ENCODE measurements at regions of chr17 and their contacts with region 1.

Region 1: GRCh38 chr17:37609170-37610040 is at the start of gene SYNRG:
- DNase-seq: peak; percentile 92
- H3K4me3 Mint-ChIP-seq: peak within 1 kb of the TSS; percentile 74
- H3K27ac Mint-ChIP-seq: peak within 1 kb of the TSS; percentile 88
- H3K4me1 Mint-ChIP-seq: peaks cover 35% of the 10 kb centered on the region
- H3K27me3 Mint-ChIP-seq: no peaks in the 10 kb centered on the region
- total RNA-seq, gene SYNRG: 51.3 and 51.4 TPM in 2 replicates

Region 2: DNA sequence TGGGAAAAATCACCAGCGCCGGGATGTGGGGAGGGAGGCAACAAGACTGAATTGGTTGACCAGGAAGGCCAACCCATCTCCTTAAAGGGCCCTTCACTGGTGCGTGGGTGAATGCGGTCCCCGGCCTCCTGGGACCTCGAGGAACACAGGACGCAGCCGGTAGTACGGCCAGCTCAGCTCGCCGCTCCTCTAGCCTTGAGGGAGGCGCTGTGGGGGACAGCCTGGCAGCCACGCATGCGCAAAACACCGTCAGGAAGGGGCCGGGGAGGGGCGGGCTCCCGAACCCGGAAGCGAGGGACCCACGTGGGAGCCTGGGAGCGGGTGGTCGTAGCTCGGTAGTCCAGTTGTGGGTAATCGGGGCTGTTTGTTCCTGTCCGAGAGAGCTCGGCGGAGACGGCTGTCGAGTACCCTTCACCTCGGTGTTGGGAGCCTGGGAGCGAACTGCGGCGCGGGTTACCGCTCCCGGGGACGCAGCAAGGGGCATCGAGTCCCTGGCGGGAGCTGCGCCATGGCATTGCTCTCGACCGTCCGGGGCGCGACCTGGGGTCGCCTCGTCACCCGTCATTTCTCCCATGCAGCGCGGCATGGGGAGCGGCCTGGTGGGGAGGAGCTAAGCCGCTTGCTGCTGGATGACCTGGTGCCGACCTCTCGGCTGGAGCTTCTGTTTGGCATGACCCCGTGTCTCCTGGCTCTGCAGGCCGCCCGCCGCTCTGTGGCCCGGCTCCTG is 1007.9 kb before region 1 on chr17 and contains the start of gene MRM1:
- intact Hi-C with region 1: loop called (anchors 10 kb)
- DNase-seq: peak; percentile 85
- H3K4me3 Mint-ChIP-seq: peak within 1 kb of the TSS; percentile 91
- H3K27ac Mint-ChIP-seq: peak within 1 kb of the TSS; percentile 70
- H3K4me1 Mint-ChIP-seq: peaks cover 38% of the 10 kb centered on the region
- H3K27me3 Mint-ChIP-seq: no peaks in the 10 kb centered on the region
- total RNA-seq, gene MRM1: 21.0 and 22.7 TPM in 2 replicates

Region 3: GRCh38 chr17:37358830-37359681 is 250.3 kb before region 1 on chr17:
- intact Hi-C with region 1: loop called (anchors 2 kb)
- DNase-seq: peak; percentile 90
- H3K4me3 Mint-ChIP-seq: peak overlapping the region; percentile 98
- H3K27ac Mint-ChIP-seq: peak overlapping the region; percentile 92
- H3K4me1 Mint-ChIP-seq: peaks cover 32% of the 10 kb centered on the region
- H3K27me3 Mint-ChIP-seq: no peaks in the 10 kb centered on the region

Region 4: DNA sequence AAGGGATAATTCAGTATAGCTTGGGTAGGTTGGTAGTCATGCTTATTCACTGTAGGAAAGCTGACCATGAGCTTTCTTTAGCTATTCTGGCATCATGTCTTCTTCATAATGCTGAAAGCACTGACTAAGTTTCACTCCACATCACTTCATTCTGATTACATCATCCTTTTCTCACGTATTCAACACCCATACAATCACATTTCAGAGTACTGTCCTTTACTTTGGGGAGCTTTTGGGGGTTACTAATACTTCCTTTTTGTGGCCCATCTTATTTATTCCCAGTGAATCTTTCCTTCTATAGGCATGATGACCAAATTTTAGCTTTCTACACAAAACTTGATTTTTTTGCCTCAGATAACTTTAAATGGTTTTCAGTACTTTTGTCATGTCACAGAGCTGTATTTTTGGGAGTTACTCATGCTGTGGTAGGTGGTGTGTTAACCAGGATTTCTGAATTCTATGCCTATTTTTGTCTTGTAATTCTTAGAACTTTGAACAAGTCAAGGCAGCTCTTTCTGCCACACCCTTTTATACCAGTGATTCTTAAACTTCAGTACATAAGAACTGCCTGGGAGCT is 179.3 kb before region 1 on chr17:
- intact Hi-C with region 1: no loop called
- DNase-seq: no peak
- H3K4me3 Mint-ChIP-seq: peak overlapping the region; percentile 19
- H3K27ac Mint-ChIP-seq: peak overlapping the region; percentile 95
- H3K4me1 Mint-ChIP-seq: peaks cover 37% of the 10 kb centered on the region
- H3K27me3 Mint-ChIP-seq: no peaks in the 10 kb centered on the region

Region 5: DNA sequence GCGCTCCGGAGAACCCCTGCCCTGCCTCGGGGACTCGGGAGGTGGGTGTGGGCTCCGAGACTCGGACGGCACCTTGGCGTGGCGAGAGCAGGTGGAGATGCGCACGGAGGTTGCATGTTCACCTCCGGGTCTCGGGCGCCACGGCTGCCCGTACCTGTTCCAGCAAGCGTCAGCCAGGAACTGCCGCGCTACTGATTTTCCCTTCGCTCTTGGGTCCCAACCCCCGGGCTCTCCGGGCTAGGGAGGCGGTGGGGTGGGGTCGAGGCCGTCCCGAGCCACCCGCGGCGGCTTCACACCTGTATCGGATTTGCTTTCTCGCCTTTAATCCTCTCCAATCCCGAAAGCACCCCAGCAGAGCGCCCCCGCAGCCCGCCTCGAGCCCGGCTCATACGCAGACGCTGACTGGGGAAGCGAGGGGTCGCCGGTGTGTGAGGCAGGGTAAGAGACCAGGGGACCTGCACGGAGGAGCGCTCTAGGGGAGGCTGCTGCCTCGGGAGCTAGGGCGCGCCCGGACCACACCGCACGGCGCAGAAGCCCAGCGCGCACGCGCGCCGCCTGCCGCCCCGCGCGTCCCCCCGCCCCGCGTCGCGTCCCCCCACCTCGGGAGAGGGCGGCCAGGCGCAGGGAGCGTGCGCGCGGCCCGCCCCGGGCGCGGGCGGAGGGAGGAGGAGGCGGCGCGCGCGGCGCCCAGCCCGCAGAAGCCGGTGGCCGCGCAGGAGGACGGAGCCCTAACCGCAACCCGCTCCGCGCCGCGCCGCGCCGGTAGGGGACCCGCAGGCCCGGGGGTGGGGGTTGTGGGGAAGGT is 120.0 kb before region 1 on chr17 and contains the start of gene DUSP14:
- intact Hi-C with region 1: loop called (anchors 2 kb)
- DNase-seq: peak; percentile 74
- H3K4me3 Mint-ChIP-seq: peak within 1 kb of the TSS; percentile 94
- H3K27ac Mint-ChIP-seq: peak within 1 kb of the TSS; percentile 97
- H3K4me1 Mint-ChIP-seq: peaks cover 50% of the 10 kb centered on the region
- H3K27me3 Mint-ChIP-seq: peaks cover 3% of the 10 kb centered on the region
- total RNA-seq, gene DUSP14: 21.4 and 22.3 TPM in 2 replicates

Region 6: GRCh38 chr17:37643118-37643766 is 33.8 kb after region 1 on chr17 and contains the start of gene DDX52:
- intact Hi-C with region 1: loop called (anchors 1 kb)
- DNase-seq: peak; percentile 83
- H3K4me3 Mint-ChIP-seq: peak within 1 kb of the TSS; percentile 96
- H3K27ac Mint-ChIP-seq: peak within 1 kb of the TSS; percentile 81
- H3K4me1 Mint-ChIP-seq: peaks cover 33% of the 10 kb centered on the region
- H3K27me3 Mint-ChIP-seq: peaks cover 36% of the 10 kb centered on the region
- total RNA-seq, gene DDX52: 48.7 and 55.0 TPM in 2 replicates

Region 7: DNA sequence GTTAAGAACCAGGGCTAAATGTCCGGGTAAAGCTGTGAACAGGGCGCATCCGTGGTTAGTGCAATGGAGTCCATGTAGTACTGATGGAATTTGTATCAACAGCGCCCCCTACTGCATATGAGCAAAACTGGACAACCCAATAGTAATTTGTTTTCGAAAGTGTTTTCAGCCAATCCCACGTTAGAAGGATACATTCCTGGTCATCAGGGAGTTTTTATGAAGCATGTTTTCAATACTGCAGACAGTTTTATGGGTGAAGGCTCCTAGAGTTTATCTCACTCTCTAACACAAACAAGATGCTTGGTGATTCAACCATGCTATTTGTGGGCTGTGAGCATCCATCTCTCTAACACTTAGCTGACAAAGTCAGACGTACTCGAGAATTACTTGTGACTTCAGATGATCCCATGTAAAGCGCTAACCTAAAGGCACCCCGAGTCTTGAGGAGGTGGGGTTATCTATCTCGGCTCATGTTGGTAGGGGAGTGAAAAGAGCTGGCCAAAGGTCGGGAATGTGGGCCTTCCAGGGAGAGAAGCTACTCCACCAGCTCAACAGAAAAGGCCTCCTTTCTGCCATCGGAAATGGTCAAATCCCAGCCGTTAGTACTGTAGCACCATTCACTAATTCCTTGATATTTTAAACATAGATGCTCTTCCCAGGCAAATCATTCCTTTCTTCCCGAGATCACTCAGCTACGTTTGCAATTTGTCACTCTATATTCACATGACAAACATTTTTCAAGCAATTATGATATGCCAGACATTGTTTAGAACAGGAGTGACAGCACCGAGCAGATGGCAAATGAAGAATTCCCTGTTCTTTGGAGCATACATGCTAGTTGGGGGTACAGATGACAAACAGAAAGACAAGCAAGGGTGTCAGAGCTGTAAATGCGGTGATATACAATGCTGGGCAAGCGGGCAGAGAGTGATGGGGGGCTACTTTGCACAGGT is 182.3 kb after region 1 on chr17:
- intact Hi-C with region 1: loop called (anchors 1 kb)
- DNase-seq: peak; percentile 43
- H3K4me3 Mint-ChIP-seq: no peak overlapping the region
- H3K27ac Mint-ChIP-seq: no peak overlapping the region
- H3K4me1 Mint-ChIP-seq: no peaks in the 10 kb centered on the region
- H3K27me3 Mint-ChIP-seq: peaks cover 15% of the 10 kb centered on the region

Measured in activated T-helper 1 cell treated with anti-CD3 and anti-CD28 coated beads, Interleukin-12 subunit alpha, Interleukin-12 subunit beta, Interleukin-2, Interleukin-4 antibody, amounts not matched to agents 30 ng/mL and 10 ng/mL and 1 ng/mL, durations not matched to agents 14 hours and 24 hours and 36 hours (primary cell).